CD8-positive, alpha-beta memory T cell (primary cell): ENCODE measurements at regions of chr4 and their contacts with region 1.

Region 1: DNA sequence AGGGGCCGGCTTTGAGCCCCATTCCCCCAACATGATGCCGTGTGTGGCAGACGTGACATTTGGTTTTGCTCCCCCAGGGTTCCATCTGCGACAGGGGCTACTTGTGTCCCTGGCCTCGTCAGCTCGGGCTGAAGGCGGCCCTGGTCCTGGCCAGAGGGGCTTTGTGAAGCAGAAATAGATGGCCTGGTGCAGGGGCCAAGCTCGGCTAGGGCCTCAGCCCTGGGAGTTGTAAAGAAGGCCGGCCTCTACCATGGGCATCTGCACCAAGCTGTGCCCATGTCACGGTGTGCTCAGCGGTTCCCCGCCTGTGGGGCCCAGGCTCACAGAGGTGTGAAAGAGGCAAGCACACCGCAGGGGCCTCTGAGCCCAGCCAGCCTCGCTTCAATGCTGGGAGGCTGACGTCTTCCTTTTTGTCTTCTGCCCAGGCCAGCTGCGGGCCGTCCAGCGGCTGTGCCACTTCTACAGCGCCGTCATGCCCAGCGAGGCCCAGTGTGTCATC is 32.5 kb downstream of the SH3TC1 start:
- DNase-seq: no peak
- H3K4me3 ChIP-seq: no peak overlapping the region
- H3K4me3 Mint-ChIP-seq: peak overlapping the region in 1 of 7 donors; percentile 41
- H3K27ac ChIP-seq: no peak overlapping the region
- H3K27ac Mint-ChIP-seq: no peak overlapping the region
- H3K4me1 ChIP-seq: peaks cover 32% of the 10 kb centered on the region
- H3K4me1 Mint-ChIP-seq: peaks cover 25 to 46% (median 27%) of the 10 kb centered on the region in 3 donors
- H3K27me3 ChIP-seq: no peaks in the 10 kb centered on the region
- H3K27me3 Mint-ChIP-seq: no peaks in the 10 kb centered on the region

Region 2: GRCh38 chr4:8241895-8242696 is 10.5 kb after region 1 on chr4:
- CTCF ChIA-PET with region 1: interaction called, 10 read pairs
- POLR2A ChIA-PET with region 1: no interaction called
- DNase-seq: peak; percentile 60 to 83 (median 74)
- H3K4me3 ChIP-seq: no peak overlapping the region
- H3K4me3 Mint-ChIP-seq: peak overlapping the region in 4 of 7 donors; percentile 17 to 79 (median 30)
- H3K27ac ChIP-seq: no peak overlapping the region
- H3K27ac Mint-ChIP-seq: peak overlapping the region in 4 of 8 donors; percentile 29 to 61 (median 48)
- H3K4me1 ChIP-seq: peaks cover 11% of the 10 kb centered on the region
- H3K4me1 Mint-ChIP-seq: peaks cover 6 to 12% (median 8%) of the 10 kb centered on the region in 3 donors
- H3K27me3 ChIP-seq: no peaks in the 10 kb centered on the region
- H3K27me3 Mint-ChIP-seq: peaks cover 0 to 3% of the 10 kb centered on the region in 2 donors